ENCODE measurements at regions of chr17 and their contacts with region 1.

Region 1: GRCh38 chr17:75673487-75673886 is 6.3 kb downstream of the SAP30BP start:
- DNase-seq: no peak
- ATAC-seq: peak; percentile 24
- H3K4me3 ChIP-seq: no peak overlapping the region
- H3K27ac ChIP-seq: 0 out of 2 replicates have a peak overlapping the region, but pooled peaks have one; percentile 4
- H3K4me1 ChIP-seq: peaks cover 2 to 20% of the 10 kb centered on the region in 2 experiments; a peak in 3 of 4 replicates
- H3K27me3 ChIP-seq: no peaks in the 10 kb centered on the region
- CTCF ChIP-seq: no peak
- POLR2A ChIP-seq: no peak
- RAD21 ChIP-seq: no peak

Region 2: GRCh38 chr17:75557075-75557882 is 116.2 kb before region 1 on chr17:
- CTCF ChIA-PET with region 1: no interaction called
- POLR2A ChIA-PET with region 1: no interaction called
- RAD21 ChIA-PET with region 1: no interaction called
- intact Hi-C with region 1: no loop called
- DNase-seq: no peak
- ATAC-seq: peak; percentile 79
- H3K4me3 ChIP-seq: peak overlapping the region; percentile 9 to 12; a peak in 3 of 4 replicates
- H3K27ac ChIP-seq: peak overlapping the region; percentile 86
- H3K4me1 ChIP-seq: peaks cover 32 to 41% of the 10 kb centered on the region in 2 experiments
- H3K27me3 ChIP-seq: no peaks in the 10 kb centered on the region
- CTCF ChIP-seq: no peak
- POLR2A ChIP-seq: no peak
- RAD21 ChIP-seq: no peak

Region 3: GRCh38 chr17:75652915-75653549 is 20.5 kb before region 1 on chr17:
- CTCF ChIA-PET with region 1: interaction called, 10 read pairs
- POLR2A ChIA-PET with region 1: interaction called, 3 read pairs
- RAD21 ChIA-PET with region 1: no interaction called
- intact Hi-C with region 1: no loop called
- DNase-seq: no peak
- ATAC-seq: peak; percentile 95
- H3K4me3 ChIP-seq: no peak overlapping the region
- H3K27ac ChIP-seq: no peak overlapping the region
- H3K4me1 ChIP-seq: no peaks in the 10 kb centered on the region
- H3K27me3 ChIP-seq: no peaks in the 10 kb centered on the region
- CTCF ChIP-seq: peak; percentile 87 to 98 (median 95)
- POLR2A ChIP-seq: no peak
- RAD21 ChIP-seq: peak; percentile 82

Region 4: DNA sequence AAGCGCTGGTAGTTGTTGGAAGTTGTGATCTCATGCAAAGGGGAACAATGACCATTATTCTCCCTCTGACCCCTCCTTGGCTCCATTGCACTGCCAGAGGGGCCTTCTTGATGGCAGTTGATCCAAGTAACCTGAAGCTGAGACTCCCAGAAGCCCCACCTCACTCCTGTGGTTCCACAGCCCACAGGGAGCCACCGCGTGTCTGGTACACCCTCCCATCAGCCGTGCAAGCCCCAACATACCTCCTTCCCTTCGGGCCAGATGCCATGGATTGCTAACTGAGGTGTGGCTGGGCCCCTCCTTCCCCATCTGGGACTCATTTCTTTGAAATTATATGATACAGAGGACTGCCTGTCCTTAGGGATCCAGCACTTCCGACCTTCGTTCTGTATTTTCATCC is 11.4 kb after region 1 on chr17:
- CTCF ChIA-PET with region 1: interaction called, 26 read pairs
- POLR2A ChIA-PET with region 1: interaction called, 5 read pairs
- RAD21 ChIA-PET with region 1: no interaction called
- intact Hi-C with region 1: no loop called
- DNase-seq: no peak
- ATAC-seq: peak; percentile 70
- H3K4me3 ChIP-seq: peak overlapping the region in 1 of 2 experiments; percentile 45; a peak in 3 of 4 replicates
- H3K27ac ChIP-seq: peak overlapping the region; percentile 67
- H3K4me1 ChIP-seq: peaks cover 71 to 100% of the 10 kb centered on the region in 2 experiments
- H3K27me3 ChIP-seq: no peaks in the 10 kb centered on the region
- CTCF ChIP-seq: no peak
- POLR2A ChIP-seq: no peak
- RAD21 ChIP-seq: no peak

Measured in HCT116 (cell line).